Left ventricle myocardium superior (tissue), 1 donor: ENCODE measurements at regions of chr17 and their contacts with region 1.

Region 1: DNA sequence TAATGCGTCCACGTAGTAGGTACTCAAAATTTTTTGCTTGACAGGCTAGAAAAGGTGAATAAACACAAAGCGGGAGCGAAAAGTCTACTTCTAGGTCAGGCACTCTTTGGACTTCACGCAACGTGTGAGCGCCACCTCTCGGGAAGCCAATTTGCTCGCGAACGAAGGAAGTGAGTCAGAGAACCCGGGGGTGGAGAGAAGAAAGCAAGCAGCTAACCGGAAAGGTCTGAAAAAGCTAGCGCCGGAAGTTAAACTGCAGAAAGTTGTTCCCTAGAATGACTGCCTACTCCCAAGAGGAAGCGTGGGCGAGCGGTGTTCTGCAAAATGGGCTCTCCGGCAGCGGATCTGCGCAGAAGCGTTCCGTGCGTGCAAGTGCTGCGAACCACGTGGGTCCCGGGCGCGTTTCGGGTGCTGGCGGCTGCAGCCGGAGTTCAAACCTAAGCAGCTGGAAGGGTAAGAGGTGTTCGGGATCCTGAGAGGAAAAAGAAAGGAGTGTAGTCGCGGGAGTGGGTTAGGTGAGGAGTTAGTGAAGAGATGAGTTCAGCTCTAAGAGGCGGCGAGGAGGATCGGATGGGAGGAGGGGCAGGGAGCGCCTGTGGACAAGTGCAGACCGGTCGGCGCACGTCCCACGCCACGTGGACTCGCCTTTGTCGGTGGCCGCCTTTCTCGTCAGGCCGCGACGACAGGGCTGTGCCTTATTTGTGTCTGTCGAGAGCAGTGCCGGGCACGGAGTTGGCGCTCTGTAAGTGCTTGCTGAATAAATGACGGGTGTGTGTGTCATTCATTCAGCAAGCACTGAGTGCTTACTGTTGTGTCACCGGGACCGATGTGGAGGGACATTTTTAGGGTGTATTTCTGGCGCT is at the start of gene NME1:
- DNase-seq: peak; percentile 95
- ATAC-seq: peak; percentile 97
- total RNA-seq, gene NME1: 20.3 TPM

Region 2: GRCh38 chr17:51000835-51001638 is 152.4 kb before region 1 on chr17:
- intact Hi-C with region 1: loop called (anchors 2 kb)
- DNase-seq: no peak
- ATAC-seq: peak; percentile 71

Region 3: DNA sequence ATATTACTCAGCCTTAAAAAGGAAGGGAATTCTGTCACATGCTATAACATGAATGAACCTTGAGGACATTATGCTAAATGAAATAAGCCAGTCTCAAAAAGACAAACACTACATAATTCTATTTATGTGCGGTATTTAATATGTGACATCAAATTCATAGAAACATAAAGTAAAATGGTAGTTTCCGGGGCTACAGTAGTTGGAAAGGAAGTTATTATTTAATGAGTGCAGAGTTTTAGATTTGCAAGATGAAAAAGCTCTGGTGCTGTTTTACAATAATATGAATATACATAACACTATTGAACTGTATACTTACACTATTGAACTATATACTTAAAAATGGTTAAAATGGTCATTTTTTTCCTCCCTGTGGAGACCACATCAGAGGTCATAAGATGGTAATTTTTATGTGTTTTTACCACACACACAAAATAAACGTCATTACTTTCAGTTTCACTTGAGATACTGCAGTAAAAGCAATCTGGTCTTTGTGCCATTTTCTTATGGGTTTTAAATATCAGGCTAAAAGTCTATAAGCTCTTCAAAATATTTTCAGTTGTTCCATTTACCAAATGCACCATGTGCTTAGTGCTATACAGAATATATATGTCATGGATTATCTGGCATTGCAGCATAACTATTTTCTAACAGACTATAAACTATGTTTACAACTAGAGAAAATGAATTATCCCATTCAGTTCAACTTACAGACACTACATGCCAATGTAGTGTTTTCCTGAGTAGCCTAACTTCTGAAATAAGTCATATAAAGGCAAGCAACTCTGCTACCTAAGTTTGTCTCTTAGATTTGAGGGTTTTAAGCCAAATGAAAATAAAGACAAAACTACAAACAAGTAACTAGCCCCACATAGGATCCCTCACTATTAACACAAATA is 123.6 kb before region 1 on chr17:
- intact Hi-C with region 1: no loop called
- DNase-seq: no peak
- ATAC-seq: no peak

Region 4: GRCh38 chr17:51097708-51098446 is 55.6 kb before region 1 on chr17:
- intact Hi-C with region 1: no loop called
- DNase-seq: no peak
- ATAC-seq: no peak

Region 5: DNA sequence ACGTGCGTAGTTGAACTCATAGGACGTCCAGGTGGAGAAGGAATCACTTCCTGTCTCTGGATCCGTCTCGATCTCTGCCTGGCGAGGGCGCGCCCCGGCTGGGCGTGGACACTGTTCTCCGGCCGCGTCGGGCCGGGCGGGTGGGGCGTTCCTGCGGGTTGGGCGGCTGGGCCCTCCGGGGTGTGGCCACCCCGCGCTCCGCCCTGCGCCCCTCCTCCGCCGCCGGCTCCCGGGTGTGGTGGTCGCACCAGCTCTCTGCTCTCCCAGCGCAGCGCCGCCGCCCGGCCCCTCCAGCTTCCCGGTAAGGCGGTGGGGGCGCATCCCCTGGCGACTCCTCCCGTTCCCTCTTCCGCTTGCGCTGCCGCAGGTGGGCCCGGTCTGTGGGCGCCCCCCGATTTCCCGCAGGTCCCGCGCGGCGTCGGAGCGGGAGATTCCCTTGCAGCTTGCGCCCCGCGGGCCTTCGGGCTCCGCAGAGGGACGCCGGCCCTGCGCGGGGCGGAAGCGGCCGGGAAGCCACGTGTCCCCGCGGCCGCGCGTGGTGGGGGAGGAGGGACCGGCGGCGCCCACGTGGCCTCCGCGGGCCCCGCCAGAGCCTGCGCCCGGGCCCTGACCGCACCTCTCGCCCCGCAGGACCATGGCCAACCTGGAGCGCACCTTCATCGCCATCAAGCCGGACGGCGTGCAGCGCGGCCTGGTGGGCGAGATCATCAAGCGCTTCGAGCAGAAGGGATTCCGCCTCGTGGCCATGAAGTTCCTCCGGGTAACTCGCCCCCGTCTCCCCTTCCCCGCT is 13.0 kb after region 1 on chr17 and contains the start of gene NME2:
- intact Hi-C with region 1: no loop called
- DNase-seq: peak; percentile 95
- ATAC-seq: peak; percentile 97
- total RNA-seq, gene NME2: 248 TPM